Aorta (tissue), 5 donors: ENCODE measurements at regions of chr17 and their contacts with region 1.

Region 1: DNA sequence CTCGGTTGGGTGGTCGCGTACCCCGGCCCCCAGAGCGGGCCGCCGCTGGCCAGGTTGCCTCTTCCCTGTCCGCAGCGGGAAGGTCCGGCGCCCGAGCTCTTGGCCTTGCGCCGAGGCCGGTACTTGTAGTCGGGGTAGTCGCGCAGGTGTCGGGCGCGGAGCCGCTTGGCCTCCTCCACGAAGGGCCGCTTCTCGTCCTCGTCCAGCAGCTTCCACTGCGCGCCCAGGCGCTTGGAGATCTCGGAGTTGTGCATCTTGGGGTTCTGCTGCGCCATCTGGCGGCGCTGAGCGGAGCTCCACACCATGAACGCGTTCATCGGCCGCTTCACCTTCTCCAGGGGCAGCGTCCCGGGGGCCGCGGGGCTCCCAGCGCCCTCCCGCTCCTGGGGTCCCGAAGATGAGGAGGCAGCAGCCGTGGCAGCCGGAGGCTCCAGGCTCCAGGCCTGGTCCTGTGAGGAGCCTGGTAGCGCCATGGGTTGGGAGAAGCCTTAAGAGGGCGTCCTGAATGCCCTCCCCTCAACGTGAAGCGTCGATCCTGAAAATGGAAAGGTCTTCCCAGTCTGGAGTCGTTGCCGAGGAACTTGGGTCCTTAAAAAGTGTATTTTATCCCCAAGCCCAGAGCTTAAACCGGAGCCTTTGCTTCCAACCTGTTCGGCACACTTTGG is 558 bp downstream of the SOX15 start:
- DNase-seq: peak; percentile 92 to 96
- ATAC-seq: peak; percentile 91
- H3K4me3 ChIP-seq: peak overlapping the region in 1 of 2 donors; percentile 14
- H3K27ac ChIP-seq: no peak overlapping the region
- H3K4me1 ChIP-seq: no peaks in the 10 kb centered on the region
- H3K27me3 ChIP-seq: no peaks in the 10 kb centered on the region

Region 2: GRCh38 chr17:7515911-7516610 is 73.3 kb before region 1 on chr17:
- intact Hi-C with region 1: loop called (anchors 2 to 5 kb)
- DNase-seq: no peak
- ATAC-seq: no peak
- H3K4me3 ChIP-seq: no peak overlapping the region
- H3K27ac ChIP-seq: no peak overlapping the region
- H3K4me1 ChIP-seq: no peaks in the 10 kb centered on the region
- H3K27me3 ChIP-seq: no peaks in the 10 kb centered on the region

Region 3: DNA sequence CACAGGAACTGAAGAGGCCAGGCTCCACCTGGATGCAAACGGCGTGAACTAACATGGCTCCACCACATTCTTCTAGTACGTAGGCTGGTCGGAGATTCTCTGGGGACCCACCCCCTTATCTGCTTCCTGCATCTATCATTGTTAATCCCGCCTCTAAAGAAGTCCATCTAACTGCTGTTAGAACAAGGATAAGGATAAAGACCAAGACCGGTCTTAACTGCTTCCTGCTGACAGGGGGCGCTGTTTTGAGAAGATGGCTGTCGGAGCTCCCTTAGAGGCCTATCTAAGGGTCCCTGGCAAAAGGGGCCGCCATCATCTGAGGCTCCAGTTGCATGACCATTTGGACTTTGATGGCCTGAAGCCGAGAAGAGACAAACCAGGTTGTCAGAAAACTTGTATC is 66.3 kb before region 1 on chr17:
- intact Hi-C with region 1: loop called in 1 of 2 experiments (anchors 2 kb)
- DNase-seq: no peak
- ATAC-seq: no peak
- H3K4me3 ChIP-seq: no peak overlapping the region
- H3K27ac ChIP-seq: no peak overlapping the region
- H3K4me1 ChIP-seq: no peaks in the 10 kb centered on the region
- H3K27me3 ChIP-seq: no peaks in the 10 kb centered on the region